ENCODE measurements at regions of chr5 and their contacts with region 1.

Region 1: DNA sequence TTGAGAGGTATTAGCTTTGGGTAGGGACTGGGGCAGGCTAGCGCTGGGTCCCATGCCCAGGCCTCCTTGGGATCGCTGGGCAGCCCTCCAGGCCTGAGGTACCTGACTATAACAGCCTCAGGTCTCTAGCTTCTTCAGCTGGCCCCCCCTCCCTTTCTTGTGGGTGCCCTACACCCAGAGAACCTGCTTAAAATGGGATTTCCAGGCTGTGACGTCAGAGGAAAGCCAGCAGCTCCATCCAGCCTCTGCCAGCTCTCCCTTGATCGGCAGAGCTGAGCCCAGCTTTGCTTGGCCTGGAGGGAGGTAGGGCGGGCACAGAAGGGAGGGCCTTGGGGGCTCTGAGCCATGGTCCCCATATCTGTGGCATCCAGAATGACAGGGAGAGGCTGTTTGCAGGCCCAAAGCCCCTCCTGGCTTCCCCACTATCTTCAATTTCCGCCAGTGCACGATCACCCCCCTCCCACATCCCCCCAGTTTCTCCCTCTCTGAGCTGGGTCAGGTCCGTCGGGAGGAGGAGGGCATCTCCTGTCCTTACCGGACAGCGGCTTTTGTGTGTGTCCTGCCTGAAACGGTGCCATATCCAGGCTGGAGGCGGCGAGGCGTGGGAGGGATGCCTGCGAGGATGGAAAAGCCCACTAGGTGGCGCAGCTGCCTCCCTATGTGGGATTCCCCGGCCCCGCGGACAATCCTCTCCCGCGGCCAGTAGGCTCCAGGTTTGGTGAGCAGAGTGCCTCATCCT is 10.8 kb downstream of the REEP2 start:
- DNase-seq: peak; percentile 73 to 93
- ATAC-seq: peak; percentile 97

Region 2: GRCh38 chr5:138503487-138504270 is 54.0 kb after region 1 on chr5:
- intact Hi-C with region 1: loop called (anchors 5 to 10 kb)
- DNase-seq: peak in 1 of 2 donors; percentile 15
- ATAC-seq: peak; percentile 87

Region 3: GRCh38 chr5:138641547-138642298 is 192.1 kb after region 1 on chr5:
- intact Hi-C with region 1: no loop called
- DNase-seq: peak; percentile 39 to 83
- ATAC-seq: peak; percentile 84

Measured in left colon (tissue), 2 donors.